ENCODE measurements at regions of chr5 and their contacts with region 1.

Region 1: DNA sequence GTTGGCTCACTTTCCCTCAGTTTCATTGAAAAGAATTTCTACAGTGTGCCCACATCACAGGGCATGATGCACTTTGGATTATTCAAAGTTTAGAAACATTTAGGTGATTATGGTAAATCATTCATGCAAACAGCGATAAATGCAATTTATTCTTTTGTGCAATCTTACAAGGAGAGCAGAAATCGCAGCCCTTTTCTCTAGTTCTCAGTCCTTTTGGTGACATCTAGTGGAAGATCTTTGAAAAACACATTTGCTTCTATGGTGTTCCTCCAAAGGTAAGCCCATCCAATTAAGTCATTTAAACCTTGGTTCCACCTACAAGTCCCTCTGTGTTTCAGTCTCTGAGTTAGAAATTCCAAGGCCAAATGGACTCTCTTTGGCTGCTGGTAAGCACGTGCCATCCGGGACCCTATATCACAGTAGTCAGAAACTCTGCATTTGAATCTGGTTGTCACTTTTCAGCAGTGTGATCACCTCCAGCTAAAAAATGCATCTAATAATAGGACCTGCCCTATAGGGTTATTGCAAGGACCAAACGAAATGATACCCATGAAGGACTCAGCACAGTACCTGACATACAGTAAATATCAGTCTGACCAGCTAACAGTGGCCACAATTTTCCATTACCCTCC is 66.4 kb downstream of the MACROH2A1 start:
- DNase-seq: no peak
- H3K4me3 ChIP-seq: no peak overlapping the region
- H3K27ac ChIP-seq: no peak overlapping the region
- H3K4me1 ChIP-seq: no peaks in the 10 kb centered on the region
- H3K27me3 ChIP-seq: no peaks in the 10 kb centered on the region
- CTCF ChIP-seq: peak; percentile 34 to 67 (median 62)
- POLR2A ChIP-seq: no peak

Region 2: DNA sequence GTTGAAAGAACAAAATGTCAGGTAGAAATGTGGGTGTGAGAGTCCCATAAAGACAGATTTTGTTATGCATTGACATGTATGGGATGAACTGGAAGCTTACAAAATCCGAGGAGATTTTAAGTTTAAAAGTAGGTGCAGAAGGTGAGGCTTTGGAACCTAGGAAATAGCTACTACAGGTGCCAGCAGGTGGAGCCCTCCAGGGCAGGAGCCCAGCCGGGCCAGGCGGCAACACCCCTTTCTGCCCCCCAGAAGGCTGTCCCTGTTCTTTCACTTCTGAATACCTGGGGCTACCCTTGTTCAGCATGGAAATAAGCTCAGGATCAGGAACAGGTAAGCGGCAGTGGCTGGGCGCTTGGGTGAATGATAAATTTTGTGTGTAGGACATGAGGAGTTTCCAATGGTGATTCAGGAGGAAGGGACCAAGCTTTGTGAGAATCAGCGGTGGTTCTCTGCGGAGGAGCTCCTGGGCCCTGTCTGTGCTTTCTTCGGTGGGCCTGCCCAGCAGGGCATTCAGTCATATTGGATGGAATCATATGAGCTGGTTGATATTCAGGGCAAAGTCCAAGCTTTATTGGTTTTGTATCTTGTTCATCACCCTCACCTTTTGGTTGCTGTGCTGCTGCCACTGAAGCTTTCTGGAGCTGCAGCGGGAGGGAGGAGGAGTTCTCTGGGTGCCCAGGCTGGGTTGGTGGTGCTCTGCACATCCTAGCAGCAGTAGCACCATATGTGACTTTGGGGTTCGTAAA is 415.4 kb before region 1 on chr5:
- intact Hi-C with region 1: loop called in 1 of 2 experiments (anchors 10 kb)
- DNase-seq: no peak
- H3K4me3 ChIP-seq: no peak overlapping the region
- H3K27ac ChIP-seq: no peak overlapping the region
- H3K4me1 ChIP-seq: peaks cover 0 to 10% of the 10 kb centered on the region in 2 donors
- H3K27me3 ChIP-seq: no peaks in the 10 kb centered on the region
- CTCF ChIP-seq: peak in 1 of 6 experiments; percentile 10
- POLR2A ChIP-seq: no peak

Region 3: GRCh38 chr5:135214897-135215616 is 117.6 kb before region 1 on chr5:
- intact Hi-C with region 1: loop called in 1 of 2 experiments (anchors 10 kb)
- DNase-seq: peak in 5 of 7 donors; percentile 11 to 52 (median 31)
- H3K4me3 ChIP-seq: no peak overlapping the region
- H3K27ac ChIP-seq: no peak overlapping the region
- H3K4me1 ChIP-seq: no peaks in the 10 kb centered on the region
- H3K27me3 ChIP-seq: no peaks in the 10 kb centered on the region
- CTCF ChIP-seq: no peak
- POLR2A ChIP-seq: no peak

Region 4: GRCh38 chr5:135602882-135603721 is 270.5 kb after region 1 on chr5:
- intact Hi-C with region 1: no loop called
- DNase-seq: peak in 1 of 7 donors; percentile 25
- H3K4me3 ChIP-seq: no peak overlapping the region
- H3K27ac ChIP-seq: no peak overlapping the region
- H3K4me1 ChIP-seq: no peaks in the 10 kb centered on the region
- H3K27me3 ChIP-seq: no peaks in the 10 kb centered on the region
- CTCF ChIP-seq: no peak
- POLR2A ChIP-seq: no peak